ENCODE measurements at regions of chr18 and their contacts with region 1.

Region 1: DNA sequence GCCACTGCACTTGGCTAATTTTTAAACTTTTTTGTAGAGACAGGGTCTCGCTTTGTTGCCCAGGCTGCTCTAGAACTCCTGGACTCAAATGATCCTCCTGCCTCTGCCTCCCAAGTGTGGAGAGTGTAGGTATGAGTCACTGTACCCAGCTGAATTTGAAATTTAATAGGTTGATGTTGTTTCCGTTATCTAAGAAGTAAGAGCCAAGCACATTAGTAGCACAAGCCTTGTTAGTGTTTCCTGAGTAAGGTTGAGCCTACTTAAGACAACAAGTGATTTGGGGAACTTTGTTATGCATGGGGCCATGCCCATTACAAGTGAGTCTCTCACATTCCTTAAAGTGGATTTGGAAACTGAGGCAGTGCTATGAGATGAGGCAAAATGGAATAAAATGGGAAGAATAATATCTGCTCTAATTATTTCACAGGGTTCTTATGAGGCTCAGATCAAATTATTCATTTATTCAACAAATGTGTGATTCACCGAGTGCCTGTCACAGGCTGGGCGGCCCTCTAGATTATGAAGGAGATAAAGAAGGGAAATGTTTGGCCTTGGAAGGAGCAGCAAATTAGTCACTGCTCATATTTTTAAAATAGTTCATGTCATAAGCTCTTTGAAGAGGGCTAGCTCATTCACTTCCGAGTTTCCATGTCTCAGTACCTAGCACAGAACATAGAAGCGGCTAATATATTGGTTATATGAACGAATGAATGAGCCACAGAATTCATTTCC is 217.2 kb downstream of the LDLRAD4 start:
- DNase-seq: no peak
- H3K4me3 Mint-ChIP-seq: no peak overlapping the region
- H3K27ac Mint-ChIP-seq: no peak overlapping the region
- H3K4me1 Mint-ChIP-seq: peaks cover 68% of the 10 kb centered on the region
- H3K27me3 Mint-ChIP-seq: no peaks in the 10 kb centered on the region

Region 2: DNA sequence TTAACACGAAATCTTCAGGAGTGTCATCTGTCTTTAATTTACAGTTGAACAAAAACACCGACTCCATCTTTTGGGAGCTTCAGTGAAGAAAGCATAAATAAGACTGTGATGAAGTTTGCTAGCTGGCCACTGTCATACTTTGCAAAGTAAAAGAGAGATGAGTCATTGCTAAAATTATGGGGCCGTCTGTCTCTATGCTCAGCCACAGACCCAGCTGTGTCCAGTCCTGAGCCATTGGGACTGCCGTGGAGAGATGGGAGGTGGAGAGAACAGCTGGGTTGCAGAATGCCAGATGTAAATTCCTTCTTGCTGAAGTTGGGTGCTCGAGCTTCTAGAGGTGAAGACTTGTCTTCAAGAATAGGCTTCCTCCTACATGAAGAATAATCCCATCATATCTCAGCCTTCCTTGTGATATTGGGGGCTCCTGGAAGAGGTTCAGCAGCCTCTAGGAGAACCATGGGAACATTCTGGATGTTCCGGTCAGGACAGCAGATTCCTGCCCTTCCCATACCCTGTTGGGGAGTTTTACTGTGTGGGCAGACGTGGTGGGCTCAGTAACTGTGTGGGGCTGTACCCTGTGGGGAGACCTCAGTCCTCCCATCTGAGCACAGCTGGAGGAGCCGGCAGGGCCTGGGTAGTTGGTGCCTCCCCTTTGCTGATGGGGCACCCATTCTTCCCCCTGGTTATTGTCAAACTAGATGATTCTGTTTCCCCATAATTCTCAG is 146.1 kb before region 1 on chr18:
- intact Hi-C with region 1: loop called (anchors 5 kb)
- DNase-seq: no peak
- H3K4me3 Mint-ChIP-seq: no peak overlapping the region
- H3K27ac Mint-ChIP-seq: peak overlapping the region; percentile 67
- H3K4me1 Mint-ChIP-seq: peaks cover 66% of the 10 kb centered on the region
- H3K27me3 Mint-ChIP-seq: peaks cover 3% of the 10 kb centered on the region

Region 3: DNA sequence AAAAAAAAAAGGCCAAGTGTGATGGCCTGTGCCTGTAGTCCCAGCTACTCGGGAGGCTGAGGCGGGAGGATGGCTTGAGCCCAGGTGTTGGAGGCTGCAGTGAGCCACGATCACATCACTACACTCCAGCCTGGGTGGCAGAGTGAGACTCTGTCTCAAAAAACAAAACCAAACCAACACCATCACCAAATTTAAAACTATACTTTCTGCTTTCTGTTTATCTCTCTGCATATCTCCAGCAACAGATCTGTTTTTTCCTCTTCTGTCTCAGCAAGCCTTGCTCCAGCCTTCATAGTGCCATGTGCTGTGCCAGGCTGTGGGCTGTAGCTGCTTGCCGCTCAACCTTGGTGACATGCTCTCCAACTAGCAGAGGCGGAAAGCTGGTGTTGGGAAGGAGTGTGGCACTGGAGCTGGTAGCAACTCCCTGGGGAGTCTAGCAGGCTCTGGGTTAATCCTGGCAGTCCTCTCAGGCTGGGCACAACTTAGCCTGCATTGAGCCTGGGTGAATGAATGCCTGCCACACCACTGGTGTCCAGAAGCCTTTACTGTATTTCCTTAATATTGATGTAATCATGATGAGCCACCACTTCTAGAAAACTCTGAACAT is 13.1 kb before region 1 on chr18:
- intact Hi-C with region 1: loop called (anchors 2 kb)
- DNase-seq: no peak
- H3K4me3 Mint-ChIP-seq: no peak overlapping the region
- H3K27ac Mint-ChIP-seq: no peak overlapping the region
- H3K4me1 Mint-ChIP-seq: peaks cover 27% of the 10 kb centered on the region
- H3K27me3 Mint-ChIP-seq: no peaks in the 10 kb centered on the region

Region 4: DNA sequence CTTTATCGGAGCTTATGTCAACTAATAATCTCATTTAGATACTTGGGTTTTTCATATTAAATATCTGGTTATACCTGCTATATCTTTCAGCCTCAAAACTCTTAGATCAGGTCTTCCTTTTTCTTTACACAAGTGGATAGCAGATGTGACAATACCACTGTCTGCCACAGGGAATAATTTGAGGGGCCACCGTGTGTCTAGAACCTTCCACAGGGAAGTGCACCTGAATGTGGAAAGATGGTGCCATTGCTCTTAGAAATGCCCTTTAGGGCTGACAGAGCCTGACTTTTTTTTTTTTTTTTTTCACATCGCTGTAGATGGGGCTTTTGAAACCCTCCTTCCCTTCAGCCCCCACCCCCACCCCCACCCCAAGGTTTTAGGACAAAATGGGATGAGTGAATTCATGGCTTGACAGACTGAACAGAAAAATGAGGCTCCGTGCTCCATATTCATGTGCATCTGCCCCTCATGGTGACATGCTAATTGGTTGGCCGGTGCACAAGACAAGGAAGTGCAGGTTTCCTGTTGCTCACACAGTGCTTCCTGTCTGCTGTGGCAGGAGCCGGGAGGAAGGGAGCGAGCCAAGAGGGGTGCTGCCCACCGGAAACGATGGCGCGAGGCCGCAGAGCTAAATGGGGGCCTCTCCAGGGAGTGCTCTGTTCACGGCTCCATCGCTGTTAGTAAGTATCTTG is 28.8 kb after region 1 on chr18:
- intact Hi-C with region 1: loop called (anchors 2 kb)
- DNase-seq: peak; percentile 59
- H3K4me3 Mint-ChIP-seq: peak overlapping the region; percentile 90
- H3K27ac Mint-ChIP-seq: peak overlapping the region; percentile 90
- H3K4me1 Mint-ChIP-seq: peaks cover 60% of the 10 kb centered on the region
- H3K27me3 Mint-ChIP-seq: no peaks in the 10 kb centered on the region

Region 5: GRCh38 chr18:13481820-13482617 is 46.3 kb after region 1 on chr18:
- intact Hi-C with region 1: no loop called
- DNase-seq: no peak
- H3K4me3 Mint-ChIP-seq: no peak overlapping the region
- H3K27ac Mint-ChIP-seq: no peak overlapping the region
- H3K4me1 Mint-ChIP-seq: peaks cover 18% of the 10 kb centered on the region
- H3K27me3 Mint-ChIP-seq: no peaks in the 10 kb centered on the region

Region 6: DNA sequence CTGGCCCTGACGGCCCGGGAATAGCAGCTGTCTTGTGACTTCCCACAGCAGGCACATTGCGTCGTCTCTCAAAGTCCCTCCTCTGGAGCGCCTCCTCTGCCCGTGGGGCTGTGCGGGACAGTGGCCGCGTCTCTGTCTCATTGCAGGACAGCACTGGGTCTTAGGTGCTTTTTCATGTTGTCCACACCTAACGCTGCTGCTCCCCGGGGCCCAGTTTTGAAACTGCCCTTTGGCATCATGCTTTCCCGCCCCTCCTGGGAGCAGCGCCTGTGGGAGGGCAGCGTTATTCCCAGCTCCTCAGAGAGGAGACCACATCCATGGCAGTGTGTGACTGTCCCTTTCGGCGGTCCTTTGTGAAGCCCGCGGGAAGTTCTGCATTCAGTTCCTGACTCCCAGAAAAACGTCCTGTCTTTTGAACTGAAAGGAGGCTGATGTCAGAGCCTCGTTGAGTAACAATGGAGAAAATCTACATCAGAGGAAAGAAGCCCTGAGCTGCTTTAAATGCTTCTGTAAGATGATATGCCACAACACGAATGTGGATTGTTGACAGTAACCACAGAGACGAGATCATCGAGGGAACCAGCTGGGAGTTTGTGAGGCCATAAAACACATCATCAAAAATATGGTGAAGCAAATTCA is 64.6 kb after region 1 on chr18:
- intact Hi-C with region 1: no loop called
- DNase-seq: no peak
- H3K4me3 Mint-ChIP-seq: no peak overlapping the region
- H3K27ac Mint-ChIP-seq: no peak overlapping the region
- H3K4me1 Mint-ChIP-seq: peaks cover 32% of the 10 kb centered on the region
- H3K27me3 Mint-ChIP-seq: no peaks in the 10 kb centered on the region

Region 7: GRCh38 chr18:13577091-13577697 is 141.4 kb after region 1 on chr18:
- intact Hi-C with region 1: no loop called
- DNase-seq: peak; percentile 41
- H3K4me3 Mint-ChIP-seq: peak overlapping the region; percentile 67
- H3K27ac Mint-ChIP-seq: peak overlapping the region; percentile 87
- H3K4me1 Mint-ChIP-seq: peaks cover 56% of the 10 kb centered on the region
- H3K27me3 Mint-ChIP-seq: no peaks in the 10 kb centered on the region

Measured in activated T-helper 1 cell treated with anti-CD3 and anti-CD28 coated beads, Interleukin-12 subunit alpha, Interleukin-12 subunit beta, Interleukin-2, Interleukin-4 antibody, amounts not matched to agents 30 ng/mL and 10 ng/mL and 1 ng/mL, durations not matched to agents 14 hours and 24 hours and 36 hours (primary cell).